Calu3 (cell line): ENCODE measurements at regions of chr18 and their contacts with region 1.

Region 1: GRCh38 chr18:2547477-2548087 is 23.7 kb downstream of the METTL4 start:
- DNase-seq: no peak
- H3K4me3 Mint-ChIP-seq: no peak overlapping the region
- H3K27ac Mint-ChIP-seq: no peak overlapping the region
- H3K4me1 Mint-ChIP-seq: no peaks in the 10 kb centered on the region
- H3K27me3 Mint-ChIP-seq: no peaks in the 10 kb centered on the region
- CTCF ChIP-seq: peak; percentile 71

Region 2: DNA sequence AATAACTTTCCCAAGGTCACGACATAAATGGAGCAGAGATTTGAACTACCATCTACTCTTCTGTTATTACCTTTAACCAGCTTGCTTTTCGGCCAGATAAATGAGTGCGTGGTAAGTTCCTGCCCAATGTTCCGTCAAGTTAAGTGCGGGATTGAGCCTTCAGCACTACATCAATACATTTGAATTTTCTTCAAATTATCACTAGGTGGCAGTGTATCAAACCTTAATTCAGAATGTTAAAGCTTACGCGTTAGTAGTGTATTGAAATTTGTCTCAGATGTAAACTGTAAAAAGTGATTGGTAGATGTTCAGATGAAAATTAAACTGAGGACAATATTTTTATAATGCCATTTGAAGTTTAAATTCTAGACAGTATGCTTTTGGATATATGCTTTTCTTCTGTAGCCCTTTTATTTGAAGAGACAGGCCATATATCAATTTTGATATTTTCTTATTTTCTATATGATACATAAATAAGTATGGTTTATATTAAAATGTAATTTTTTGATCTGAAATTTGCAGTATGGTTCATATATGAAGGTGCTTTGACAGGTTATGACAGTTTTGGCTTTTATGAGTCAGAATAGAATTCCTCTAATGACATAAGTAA is 961.6 kb before region 1 on chr18:
- CTCF ChIA-PET with region 1: no interaction called
- intact Hi-C with region 1: loop called (anchors 2 kb)
- DNase-seq: no peak
- H3K4me3 Mint-ChIP-seq: no peak overlapping the region
- H3K27ac Mint-ChIP-seq: no peak overlapping the region
- H3K4me1 Mint-ChIP-seq: no peaks in the 10 kb centered on the region
- H3K27me3 Mint-ChIP-seq: peaks cover 24% of the 10 kb centered on the region
- CTCF ChIP-seq: peak; percentile 42

Region 3: DNA sequence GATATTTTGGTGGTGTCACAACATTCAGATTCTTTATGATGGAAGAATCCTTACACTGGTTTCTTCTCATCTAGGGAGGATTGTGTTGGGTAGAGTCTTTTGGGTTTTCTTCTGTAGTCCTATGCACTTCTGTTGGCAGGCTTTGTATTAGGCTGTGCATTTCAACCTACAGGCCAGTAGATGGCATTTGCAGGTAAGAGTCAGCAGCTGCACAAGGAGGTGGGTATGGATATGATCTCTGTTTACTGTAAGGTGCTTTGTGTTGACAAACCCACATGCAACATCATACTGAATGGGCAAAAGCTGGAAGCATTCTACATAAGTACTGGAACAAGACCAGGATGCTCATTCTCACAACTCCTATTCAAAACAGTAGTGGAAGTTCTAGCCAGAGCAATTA is 633.1 kb before region 1 on chr18:
- CTCF ChIA-PET with region 1: no interaction called
- intact Hi-C with region 1: loop called (anchors 5 kb)
- DNase-seq: peak; percentile 18
- H3K4me3 Mint-ChIP-seq: no peak overlapping the region
- H3K27ac Mint-ChIP-seq: no peak overlapping the region
- H3K4me1 Mint-ChIP-seq: no peaks in the 10 kb centered on the region
- H3K27me3 Mint-ChIP-seq: no peaks in the 10 kb centered on the region
- CTCF ChIP-seq: peak; percentile 48

Region 4: DNA sequence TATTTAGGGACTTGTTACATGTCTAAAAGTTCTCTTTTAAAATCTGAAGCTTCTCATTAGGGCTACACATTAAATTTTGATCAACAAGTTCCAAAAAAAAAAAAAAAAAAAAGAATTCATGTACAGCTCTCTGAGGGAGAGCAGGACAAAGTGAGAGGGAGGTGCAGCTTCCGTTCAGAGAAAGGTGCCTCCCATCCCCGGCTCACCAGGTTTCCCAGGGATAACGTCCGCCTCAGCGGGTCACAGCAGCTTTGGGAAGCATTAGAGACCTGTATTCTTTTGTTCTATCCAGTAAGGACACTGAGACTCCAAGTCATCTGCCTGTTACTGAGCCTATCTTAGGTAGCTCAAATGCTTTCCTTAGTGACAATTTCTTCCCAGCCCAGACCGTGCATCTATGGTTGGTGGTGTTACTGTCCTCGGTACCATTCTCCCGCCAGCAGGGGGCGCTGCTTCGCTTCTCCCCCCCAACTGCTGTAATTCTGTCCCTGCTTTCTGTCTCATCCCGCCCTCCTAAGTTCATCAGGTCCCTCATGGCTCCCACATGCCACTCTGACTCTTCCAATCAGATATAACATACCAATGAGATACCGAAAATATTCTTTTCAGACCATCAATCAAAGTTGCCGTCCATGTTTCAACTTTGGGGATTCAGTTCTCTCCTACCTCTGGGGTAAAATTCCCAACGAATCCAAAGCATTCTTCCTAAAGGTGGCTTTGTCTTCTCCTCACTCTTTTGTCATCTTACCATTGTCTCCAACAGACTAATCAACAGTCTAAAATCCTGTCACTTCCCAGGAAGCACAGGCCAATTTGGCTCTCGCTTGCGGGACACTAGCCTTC is 442.7 kb before region 1 on chr18:
- CTCF ChIA-PET with region 1: interaction called, 9 read pairs
- intact Hi-C with region 1: loop called (anchors 2 kb)
- DNase-seq: peak; percentile 71
- H3K4me3 Mint-ChIP-seq: no peak overlapping the region
- H3K27ac Mint-ChIP-seq: no peak overlapping the region
- H3K4me1 Mint-ChIP-seq: no peaks in the 10 kb centered on the region
- H3K27me3 Mint-ChIP-seq: no peaks in the 10 kb centered on the region
- CTCF ChIP-seq: peak; percentile 83

Region 5: GRCh38 chr18:2302614-2303516 is 244.7 kb before region 1 on chr18:
- CTCF ChIA-PET with region 1: no interaction called
- intact Hi-C with region 1: loop called (anchors 10 kb)
- DNase-seq: peak; percentile 57
- H3K4me3 Mint-ChIP-seq: peak overlapping the region; percentile 58
- H3K27ac Mint-ChIP-seq: peak overlapping the region; percentile 87
- H3K4me1 Mint-ChIP-seq: peaks cover 57% of the 10 kb centered on the region
- H3K27me3 Mint-ChIP-seq: no peaks in the 10 kb centered on the region
- CTCF ChIP-seq: no peak

Region 6: GRCh38 chr18:2337552-2338141 is 209.9 kb before region 1 on chr18:
- CTCF ChIA-PET with region 1: no interaction called
- intact Hi-C with region 1: loop called (anchors 1 kb)
- DNase-seq: peak; percentile 47
- H3K4me3 Mint-ChIP-seq: no peak overlapping the region
- H3K27ac Mint-ChIP-seq: no peak overlapping the region
- H3K4me1 Mint-ChIP-seq: peaks cover 13% of the 10 kb centered on the region
- H3K27me3 Mint-ChIP-seq: no peaks in the 10 kb centered on the region
- CTCF ChIP-seq: peak; percentile 69

Region 7: DNA sequence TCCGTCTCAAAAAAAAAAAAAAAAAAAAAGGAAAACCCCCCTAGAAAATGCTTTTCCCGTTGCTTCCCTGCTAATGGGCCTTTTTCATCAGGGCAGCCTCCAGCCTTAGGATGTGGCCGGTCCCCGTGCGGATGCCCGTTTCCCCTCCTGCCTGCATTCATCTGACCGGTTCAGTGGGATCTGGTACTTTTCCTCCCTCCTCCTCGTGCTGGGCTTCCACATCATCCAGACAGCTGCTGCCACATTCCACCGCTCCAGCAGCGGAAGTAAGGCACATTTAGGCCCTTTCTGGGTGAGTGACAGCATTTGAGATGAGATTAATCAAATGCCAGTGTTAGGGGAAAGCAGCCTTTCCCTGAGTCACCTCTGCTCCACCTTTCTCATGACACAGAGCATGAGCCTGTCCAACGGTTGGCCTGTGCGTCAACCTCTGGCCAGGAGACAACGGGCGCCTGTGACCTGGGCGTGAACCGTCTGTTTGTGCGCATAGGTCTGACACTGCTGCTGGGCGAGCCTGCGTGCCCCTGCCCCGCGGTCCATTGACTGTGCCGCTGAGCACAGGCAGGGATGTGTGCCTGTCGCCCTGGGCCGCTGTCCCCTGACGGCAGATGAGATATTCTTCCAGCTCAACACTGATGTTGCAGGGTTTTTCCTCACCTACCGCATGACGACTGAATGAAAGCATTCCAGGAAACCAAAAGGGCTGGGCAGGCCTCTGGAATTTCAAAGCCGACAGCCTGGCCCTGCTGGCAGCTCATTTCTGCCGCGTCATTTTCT is 1076.4 kb after region 1 on chr18:
- CTCF ChIA-PET with region 1: no interaction called
- intact Hi-C with region 1: no loop called
- DNase-seq: peak; percentile 88
- H3K4me3 Mint-ChIP-seq: peak overlapping the region; percentile 63
- H3K27ac Mint-ChIP-seq: peak overlapping the region; percentile 98
- H3K4me1 Mint-ChIP-seq: peaks cover 81% of the 10 kb centered on the region
- H3K27me3 Mint-ChIP-seq: no peaks in the 10 kb centered on the region
- CTCF ChIP-seq: no peak